CD8-positive, alpha-beta memory T cell (primary cell): ENCODE measurements at regions of chr14 and their contacts with region 1.

Region 1: DNA sequence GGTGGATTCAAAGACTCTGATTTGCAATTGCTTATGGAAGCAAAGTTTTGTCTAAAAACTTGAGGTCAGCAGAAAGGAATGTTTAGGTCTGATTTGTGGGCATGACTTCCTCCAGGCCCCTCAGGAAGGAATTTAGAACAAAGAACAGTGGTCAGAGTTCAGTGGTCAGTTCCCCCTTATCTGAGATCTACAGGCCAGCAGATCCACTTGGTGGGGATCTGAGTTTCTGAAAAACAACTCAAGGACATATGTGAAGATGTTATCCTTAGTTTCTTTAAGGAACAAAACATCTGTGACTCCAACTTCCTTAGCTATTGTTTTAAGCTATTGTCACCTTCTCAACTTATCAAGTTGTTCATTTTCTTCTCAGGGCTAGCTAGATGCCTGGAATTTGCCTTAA is 28.0 kb upstream of the NAA30 start:
- DNase-seq: no peak
- H3K4me3 ChIP-seq: no peak overlapping the region
- H3K4me3 Mint-ChIP-seq: no peak overlapping the region
- H3K27ac ChIP-seq: no peak overlapping the region
- H3K27ac Mint-ChIP-seq: no peak overlapping the region
- H3K4me1 ChIP-seq: no peaks in the 10 kb centered on the region
- H3K4me1 Mint-ChIP-seq: no peaks in the 10 kb centered on the region
- H3K27me3 ChIP-seq: peaks cover 7% of the 10 kb centered on the region
- H3K27me3 Mint-ChIP-seq: peaks cover 28 to 42% of the 10 kb centered on the region in 2 donors

Region 2: DNA sequence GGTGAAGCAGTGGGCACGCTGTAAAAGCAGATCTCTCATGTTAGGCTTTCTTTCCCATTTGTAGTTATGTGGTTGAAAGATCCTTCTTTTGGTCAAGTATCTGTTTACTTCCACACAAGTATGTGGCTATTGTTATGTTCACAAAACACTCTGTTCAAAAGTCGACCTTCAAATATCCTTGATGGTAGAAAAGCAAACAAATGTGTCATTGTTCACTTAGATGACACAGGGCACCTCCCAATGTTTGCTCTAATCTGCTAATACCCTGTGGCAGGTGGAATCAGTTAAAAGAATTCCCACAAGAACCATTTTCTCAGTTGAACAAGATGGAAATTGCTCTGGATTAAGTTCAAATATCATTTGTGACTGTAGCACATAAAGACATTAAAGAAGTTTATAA is 15.6 kb before region 1 on chr14:
- CTCF ChIA-PET with region 1: no interaction called
- POLR2A ChIA-PET with region 1: no interaction called
- DNase-seq: no peak
- H3K4me3 ChIP-seq: no peak overlapping the region
- H3K4me3 Mint-ChIP-seq: no peak overlapping the region
- H3K27ac ChIP-seq: no peak overlapping the region
- H3K27ac Mint-ChIP-seq: no peak overlapping the region
- H3K4me1 ChIP-seq: no peaks in the 10 kb centered on the region
- H3K4me1 Mint-ChIP-seq: no peaks in the 10 kb centered on the region
- H3K27me3 ChIP-seq: no peaks in the 10 kb centered on the region
- H3K27me3 Mint-ChIP-seq: peaks cover 13 to 46% of the 10 kb centered on the region in 2 donors

Region 3: DNA sequence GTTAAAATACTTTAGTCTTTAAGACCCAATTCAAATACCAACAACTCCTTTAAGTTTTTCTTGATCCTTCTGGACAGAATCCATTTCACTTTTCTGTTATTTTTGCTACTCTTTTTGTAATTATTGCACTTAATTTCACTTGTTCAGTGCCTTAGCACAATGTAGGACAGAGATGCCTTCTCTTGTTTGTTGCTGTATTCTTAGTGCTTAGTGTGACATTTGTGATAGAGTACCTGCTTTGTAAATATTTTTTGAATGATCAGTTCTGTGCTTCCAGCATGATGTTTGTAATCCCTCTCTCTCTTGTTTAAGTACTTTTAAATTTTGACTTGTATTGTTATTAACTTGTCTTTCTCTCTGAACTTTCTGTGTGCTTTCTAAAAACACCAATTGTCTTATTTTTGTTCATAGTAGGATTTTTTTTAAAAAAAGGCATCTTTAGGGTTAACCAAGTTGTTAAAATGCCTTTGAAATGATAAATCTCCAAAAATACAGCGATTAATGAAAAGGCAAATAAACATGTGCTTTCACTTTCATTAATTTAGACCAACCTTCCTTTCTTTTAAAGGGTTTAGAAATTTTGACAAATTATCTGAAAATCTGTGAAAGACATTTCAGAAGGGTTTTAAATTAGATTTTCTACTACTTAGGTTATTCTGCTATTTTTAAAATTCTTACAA is 40.0 kb after region 1 on chr14:
- CTCF ChIA-PET with region 1: no interaction called
- POLR2A ChIA-PET with region 1: interaction called, 10 read pairs
- DNase-seq: no peak
- H3K4me3 ChIP-seq: no peak overlapping the region
- H3K4me3 Mint-ChIP-seq: peak overlapping the region in 6 of 7 donors; percentile 10 to 75 (median 45)
- H3K27ac ChIP-seq: no peak overlapping the region
- H3K27ac Mint-ChIP-seq: peak overlapping the region in 3 of 8 donors; percentile 30 to 52 (median 43)
- H3K4me1 ChIP-seq: peaks cover 12% of the 10 kb centered on the region
- H3K4me1 Mint-ChIP-seq: peaks cover 43 to 65% (median 65%) of the 10 kb centered on the region in 3 donors
- H3K27me3 ChIP-seq: no peaks in the 10 kb centered on the region
- H3K27me3 Mint-ChIP-seq: no peaks in the 10 kb centered on the region